ENCODE measurements at regions of chrX and their contacts with region 1.

Region 1: DNA sequence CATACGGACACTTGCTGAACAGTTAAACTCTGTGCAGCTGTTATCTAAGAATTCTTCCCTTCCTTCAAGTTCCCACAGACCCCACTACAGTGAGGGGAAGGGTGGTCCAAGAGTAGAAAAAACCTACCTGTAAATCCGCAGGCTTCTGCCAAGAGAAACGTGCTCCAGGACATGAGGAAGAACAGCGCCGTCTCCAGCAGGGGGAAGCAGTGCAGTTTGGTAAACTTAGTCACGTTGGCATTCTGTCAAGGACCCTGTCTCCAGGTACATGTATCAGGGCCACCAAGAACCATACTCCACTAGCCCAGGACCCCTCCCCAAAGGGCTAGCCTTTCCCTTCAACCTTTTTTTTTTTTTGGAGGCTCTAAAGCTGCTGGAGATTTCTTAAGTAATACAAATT is 79.9 kb downstream of the CHST7 start:
- DNase-seq: peak; percentile 40
- H3K4me3 ChIP-seq: no peak overlapping the region
- H3K27ac ChIP-seq: no peak overlapping the region
- H3K4me1 ChIP-seq: peaks cover 12% of the 10 kb centered on the region
- H3K27me3 ChIP-seq: no peaks in the 10 kb centered on the region
- CTCF ChIP-seq: peak; percentile 24 to 40
- POLR2A ChIP-seq: no peak

Region 2: GRCh38 chrX:46686003-46686645 is 32.6 kb after region 1 on chrX:
- CTCF ChIA-PET with region 1: interaction called, 5 read pairs
- POLR2A ChIA-PET with region 1: no interaction called
- dilution Hi-C with region 1: no loop called
- intact Hi-C with region 1: loop called (anchors 1 kb)
- DNase-seq: peak; percentile 41
- H3K4me3 ChIP-seq: no peak overlapping the region
- H3K27ac ChIP-seq: no peak overlapping the region
- H3K4me1 ChIP-seq: peaks cover 3% of the 10 kb centered on the region
- H3K27me3 ChIP-seq: no peaks in the 10 kb centered on the region
- CTCF ChIP-seq: peak; percentile 52 to 56
- POLR2A ChIP-seq: no peak

Region 3: DNA sequence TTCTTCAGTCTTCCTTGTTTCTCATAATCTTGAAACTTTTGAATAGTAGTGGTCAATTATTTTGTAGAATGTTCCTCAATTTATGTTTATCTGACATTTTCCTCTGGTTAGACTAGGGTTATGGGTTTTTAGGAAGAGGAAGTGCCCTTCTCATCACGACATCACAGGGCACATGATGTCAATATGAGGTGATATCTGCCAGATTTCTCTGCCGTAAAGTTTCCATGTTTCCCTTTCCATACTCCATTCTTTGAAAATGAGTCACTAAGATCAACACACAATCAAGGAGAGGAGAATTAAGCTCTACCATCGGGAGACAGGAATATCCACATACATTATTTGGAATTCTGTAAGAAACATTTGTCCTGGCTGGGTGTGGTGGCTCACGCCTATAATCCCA is 211.8 kb after region 1 on chrX:
- CTCF ChIA-PET with region 1: no interaction called
- POLR2A ChIA-PET with region 1: no interaction called
- dilution Hi-C with region 1: no loop called
- intact Hi-C with region 1: no loop called
- DNase-seq: peak; percentile 78
- H3K4me3 ChIP-seq: no peak overlapping the region
- H3K27ac ChIP-seq: peak overlapping the region; percentile 57
- H3K4me1 ChIP-seq: peaks cover 6% of the 10 kb centered on the region
- H3K27me3 ChIP-seq: no peaks in the 10 kb centered on the region
- CTCF ChIP-seq: no peak
- POLR2A ChIP-seq: no peak